Activated CD4-positive, alpha-beta T cell treated with anti-CD3 and anti-CD28 coated beads for 36 hours (primary cell): ENCODE measurements at regions of chr12 and their contacts with region 1.

Region 1: DNA sequence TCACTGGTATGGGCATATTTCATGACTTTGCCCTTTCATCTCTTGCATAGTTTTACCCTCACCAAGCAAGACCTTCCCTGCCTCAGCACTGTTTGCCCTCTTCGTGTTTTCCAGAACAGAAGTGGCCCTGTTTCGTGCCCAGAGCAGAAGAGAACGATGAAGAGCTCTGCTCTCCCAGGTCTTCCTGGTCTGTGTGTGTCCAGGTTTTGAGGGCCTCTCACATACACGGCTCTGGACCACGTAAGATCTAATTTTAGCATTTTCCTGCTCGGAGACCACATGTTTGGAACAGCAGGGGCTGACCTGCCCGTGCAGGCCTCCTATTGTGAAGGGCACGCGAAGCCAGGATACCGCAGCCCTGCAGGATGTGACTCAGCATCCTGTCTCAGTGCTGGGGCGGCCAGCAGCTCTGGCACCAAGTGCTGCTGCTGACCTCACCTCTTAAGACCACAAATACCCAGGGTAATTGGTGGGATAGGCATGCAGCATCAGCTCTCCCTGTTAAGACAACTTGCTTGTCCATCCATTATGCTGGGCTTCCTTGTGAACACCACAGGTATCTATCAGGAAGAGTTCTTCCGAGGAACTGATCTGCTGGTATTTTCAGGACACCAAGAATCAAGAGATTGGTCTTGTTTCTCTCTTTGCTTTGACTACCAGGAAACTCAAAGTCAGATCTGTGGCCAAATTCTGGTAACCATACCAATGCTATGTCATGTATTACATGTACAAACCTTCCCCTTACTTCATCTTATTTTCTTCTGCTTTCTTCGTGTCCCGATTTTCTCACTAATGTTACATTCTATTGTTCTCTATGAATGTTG is 19.0 kb downstream of the SSH1 start:
- DNase-seq: peak; percentile 83
- ATAC-seq: peak; percentile 95
- H3K4me3 Mint-ChIP-seq: peak overlapping the region; percentile 57
- H3K27ac Mint-ChIP-seq: peak overlapping the region; percentile 96
- H3K4me1 Mint-ChIP-seq: peaks cover 36% of the 10 kb centered on the region
- H3K27me3 Mint-ChIP-seq: no peaks in the 10 kb centered on the region

Region 2: DNA sequence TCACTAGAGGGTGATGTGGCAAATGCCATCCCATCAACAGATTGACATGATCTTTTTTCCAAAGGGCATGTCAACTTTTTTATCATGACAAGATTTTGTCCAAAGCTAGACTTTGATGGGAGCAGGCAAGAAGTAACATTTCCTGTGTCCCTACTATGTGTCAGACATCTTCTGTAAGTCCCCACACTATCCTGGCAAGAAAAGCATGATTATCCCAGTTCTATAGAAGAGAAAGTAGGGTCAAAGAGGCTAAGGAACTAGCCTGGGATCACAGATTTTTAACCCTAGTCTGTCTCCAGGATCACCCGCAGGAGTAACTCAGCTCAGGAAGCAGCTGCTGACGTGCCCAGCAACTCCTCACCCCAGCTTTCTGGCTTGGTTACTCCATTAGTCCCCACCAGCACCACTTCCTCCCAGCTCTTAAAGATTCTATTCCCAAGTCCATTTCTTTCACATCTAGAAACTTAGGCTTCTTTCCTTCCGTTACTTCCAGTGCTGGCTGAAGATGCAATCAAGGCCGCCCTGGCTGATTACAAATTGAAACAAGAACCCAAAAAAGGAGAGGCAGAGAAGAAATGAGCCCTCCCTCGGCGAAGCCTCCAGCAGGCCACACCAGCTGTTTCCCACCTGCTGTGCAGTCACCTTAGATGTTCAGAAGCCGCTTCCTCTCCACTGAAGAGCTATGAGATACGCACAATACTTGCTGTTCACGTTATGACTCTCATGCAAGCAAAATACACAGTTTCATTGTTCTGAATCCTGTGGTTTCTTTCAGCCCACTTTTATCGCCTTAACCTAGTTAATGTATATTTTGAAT is 269.9 kb before region 1 on chr12:
- CTCF ChIA-PET with region 1: no interaction called
- POLR2A ChIA-PET with region 1: interaction called, 11 read pairs
- intact Hi-C with region 1: no loop called
- DNase-seq: peak; percentile 86
- ATAC-seq: peak; percentile 87
- H3K4me3 Mint-ChIP-seq: peak overlapping the region; percentile 29
- H3K27ac Mint-ChIP-seq: peak overlapping the region; percentile 89
- H3K4me1 Mint-ChIP-seq: peaks cover 84% of the 10 kb centered on the region
- H3K27me3 Mint-ChIP-seq: no peaks in the 10 kb centered on the region

Region 3: DNA sequence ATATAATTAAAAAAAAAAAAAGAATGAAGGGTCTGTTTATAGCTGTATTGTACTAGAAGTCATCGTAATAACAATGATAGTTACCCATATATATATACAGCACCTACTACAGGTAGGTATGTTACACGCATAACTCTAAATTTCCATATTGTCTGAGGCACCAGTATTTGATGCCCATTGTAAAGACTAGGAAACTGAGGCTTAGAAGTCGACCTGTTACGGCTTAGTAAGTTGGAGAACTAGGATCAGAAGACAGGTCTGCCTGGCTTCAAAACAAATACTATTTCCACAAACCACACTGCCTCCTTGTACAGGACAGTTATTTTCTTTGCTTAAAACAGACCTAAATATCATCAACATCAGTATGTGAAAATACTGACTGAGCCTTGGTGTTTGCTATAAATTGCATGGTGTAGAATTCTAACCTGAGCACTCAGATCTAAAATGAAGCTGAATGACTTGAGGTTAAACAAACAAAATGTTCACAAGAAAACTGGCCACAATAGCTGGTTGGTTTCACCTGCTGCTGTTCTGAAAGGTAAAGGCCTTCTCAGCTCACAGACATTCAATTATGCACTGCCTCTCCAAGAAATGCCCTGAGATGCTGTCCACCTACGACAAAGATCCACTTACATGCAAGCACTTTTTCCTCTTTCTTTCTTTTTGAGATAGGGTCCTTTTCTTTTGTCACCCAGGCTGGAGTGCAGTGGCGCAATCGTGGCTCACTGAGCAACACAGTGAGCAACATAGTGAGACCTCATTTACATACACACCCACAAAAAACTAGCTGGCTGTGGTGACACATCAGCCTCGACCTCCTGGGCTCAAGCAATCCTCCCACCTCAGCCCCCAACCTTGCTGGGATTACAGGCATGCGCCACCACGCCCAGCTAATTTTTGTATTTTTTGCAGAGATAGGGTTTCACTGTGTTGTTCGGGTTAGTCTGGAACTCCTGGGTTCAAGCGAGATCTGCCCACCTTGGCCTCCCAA is 16.7 kb before region 1 on chr12:
- CTCF ChIA-PET with region 1: interaction called, 3 read pairs
- POLR2A ChIA-PET with region 1: no interaction called
- intact Hi-C with region 1: loop called in 1 of 2 experiments (anchors 1 kb)
- DNase-seq: peak; percentile 64
- ATAC-seq: peak; percentile 83
- H3K4me3 Mint-ChIP-seq: no peak overlapping the region
- H3K27ac Mint-ChIP-seq: peak overlapping the region; percentile 52
- H3K4me1 Mint-ChIP-seq: peaks cover 31% of the 10 kb centered on the region
- H3K27me3 Mint-ChIP-seq: no peaks in the 10 kb centered on the region

Region 4: DNA sequence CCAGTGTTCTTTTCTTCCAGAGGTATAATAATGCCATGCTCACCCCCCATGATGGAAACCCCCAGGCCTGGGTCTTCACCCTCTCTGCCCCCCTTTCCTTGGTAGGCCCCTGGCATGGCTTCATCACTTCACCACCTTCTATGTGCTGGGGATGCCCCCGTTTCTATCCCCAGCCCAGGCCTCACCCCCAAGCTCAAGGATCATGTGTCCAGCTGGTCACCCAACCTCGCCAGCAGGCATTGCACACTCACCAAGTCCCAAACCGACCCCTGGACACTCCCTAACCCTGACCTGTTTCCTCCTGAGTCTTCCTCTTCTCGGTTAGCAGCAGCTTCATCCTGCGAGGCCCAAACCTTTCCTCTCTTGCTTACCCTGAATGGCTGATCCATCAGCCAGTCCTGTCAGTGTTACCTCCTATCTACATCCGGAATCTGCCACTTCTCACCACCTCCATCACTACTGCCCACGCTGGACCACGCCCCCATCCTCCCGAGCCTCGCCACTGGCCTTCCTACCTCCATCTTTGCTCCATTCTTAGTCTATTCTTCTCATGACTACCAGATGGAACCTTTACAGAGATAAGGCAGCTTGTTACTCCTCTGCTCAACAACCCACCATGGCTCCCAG is 804.2 kb after region 1 on chr12:
- CTCF ChIA-PET with region 1: no interaction called
- POLR2A ChIA-PET with region 1: no interaction called
- intact Hi-C with region 1: no loop called
- DNase-seq: no peak
- ATAC-seq: no peak
- H3K4me3 Mint-ChIP-seq: no peak overlapping the region
- H3K27ac Mint-ChIP-seq: no peak overlapping the region
- H3K4me1 Mint-ChIP-seq: no peaks in the 10 kb centered on the region
- H3K27me3 Mint-ChIP-seq: peaks cover 5% of the 10 kb centered on the region